AG04449 (cell line): ENCODE measurements at regions of chr10 and their contacts with region 1.

Region 1: GRCh38 chr10:116787893-116788665 is 45.7 kb upstream of the HSPA12A start:
- DNase-seq: no peak
- H3K4me3 ChIP-seq: peak overlapping the region; percentile 49
- CTCF ChIP-seq: peak; percentile 95

Region 2: GRCh38 chr10:115539142-115539762 is 1248.8 kb before region 1 on chr10:
- CTCF ChIA-PET with region 1: no interaction called
- POLR2A ChIA-PET with region 1: no interaction called
- DNase-seq: no peak
- H3K4me3 ChIP-seq: no peak overlapping the region
- CTCF ChIP-seq: no peak

Region 3: DNA sequence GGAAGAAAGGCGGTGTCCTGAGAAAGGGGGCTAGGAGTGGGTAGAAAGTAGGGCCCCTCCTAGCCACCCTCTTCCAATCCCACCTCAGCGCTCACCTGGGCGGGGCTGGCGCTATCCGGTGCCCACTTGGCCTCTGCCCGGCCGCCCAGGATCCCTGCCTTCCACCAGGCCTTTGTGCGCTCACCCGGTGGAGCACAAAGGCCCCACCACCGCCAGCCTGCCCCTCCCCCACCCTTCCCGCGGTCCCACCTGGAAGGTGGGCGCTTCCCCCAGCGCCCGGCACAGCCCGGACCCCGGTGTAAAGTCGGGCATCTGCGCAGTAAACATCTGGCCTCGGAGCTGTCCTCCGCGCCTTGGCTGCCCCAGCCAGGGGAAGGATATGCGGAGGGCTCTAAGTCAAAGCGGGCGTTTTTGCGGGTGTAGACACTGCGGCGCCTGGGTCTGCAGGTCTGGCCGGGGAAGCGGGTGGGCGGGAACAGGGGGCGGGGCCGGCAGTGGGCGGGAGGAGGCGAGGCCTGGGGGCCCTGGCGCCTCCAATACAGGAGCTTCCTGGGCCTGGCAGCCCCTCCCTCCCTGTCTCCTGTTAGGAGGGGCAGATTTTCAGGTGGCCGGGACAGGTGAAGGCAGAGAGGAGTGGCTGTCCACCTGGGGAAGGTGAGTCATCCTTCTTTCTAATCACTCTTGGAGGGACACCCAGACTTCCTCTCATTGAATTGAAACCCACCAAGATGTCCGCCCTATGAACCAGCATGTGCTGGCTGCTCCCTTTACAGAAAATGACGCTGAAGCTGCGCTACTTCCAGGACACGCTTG is 118.0 kb before region 1 on chr10:
- CTCF ChIA-PET with region 1: interaction called, 658 read pairs
- POLR2A ChIA-PET with region 1: no interaction called
- DNase-seq: no peak
- H3K4me3 ChIP-seq: no peak overlapping the region; the same call in 1 of the 2 replicates
- CTCF ChIP-seq: no peak

Region 4: DNA sequence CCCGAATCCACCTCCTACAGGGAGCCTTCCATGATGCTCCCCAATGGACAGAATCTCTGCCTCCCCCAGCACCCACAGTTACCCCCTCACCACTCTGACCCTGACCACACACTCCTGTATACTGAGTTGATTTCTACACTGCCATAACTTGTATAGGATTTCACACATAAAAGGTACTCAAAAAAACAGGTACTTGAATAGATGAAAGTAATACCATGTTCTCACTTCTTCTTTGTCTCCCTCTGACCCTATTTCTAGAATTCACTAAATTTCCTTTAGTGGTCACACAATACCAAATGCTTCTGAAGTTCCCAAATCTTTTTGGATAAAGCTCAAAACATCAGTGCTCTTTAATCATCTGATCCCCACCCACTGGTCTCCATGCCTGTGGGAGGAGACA is 91.2 kb before region 1 on chr10:
- CTCF ChIA-PET with region 1: interaction called, 658 read pairs
- POLR2A ChIA-PET with region 1: no interaction called
- DNase-seq: no peak
- H3K4me3 ChIP-seq: no peak overlapping the region
- CTCF ChIP-seq: no peak

Region 5: GRCh38 chr10:116748041-116748440 is 40.0 kb before region 1 on chr10:
- CTCF ChIA-PET with region 1: interaction called, 21 read pairs
- POLR2A ChIA-PET with region 1: no interaction called
- DNase-seq: no peak
- H3K4me3 ChIP-seq: no peak overlapping the region
- CTCF ChIP-seq: no peak

Region 6: GRCh38 chr10:116771101-116771958 is 16.7 kb before region 1 on chr10:
- CTCF ChIA-PET with region 1: interaction called, 72 read pairs
- POLR2A ChIA-PET with region 1: no interaction called
- DNase-seq: peak; percentile 76
- H3K4me3 ChIP-seq: no peak overlapping the region
- CTCF ChIP-seq: no peak

Region 7: DNA sequence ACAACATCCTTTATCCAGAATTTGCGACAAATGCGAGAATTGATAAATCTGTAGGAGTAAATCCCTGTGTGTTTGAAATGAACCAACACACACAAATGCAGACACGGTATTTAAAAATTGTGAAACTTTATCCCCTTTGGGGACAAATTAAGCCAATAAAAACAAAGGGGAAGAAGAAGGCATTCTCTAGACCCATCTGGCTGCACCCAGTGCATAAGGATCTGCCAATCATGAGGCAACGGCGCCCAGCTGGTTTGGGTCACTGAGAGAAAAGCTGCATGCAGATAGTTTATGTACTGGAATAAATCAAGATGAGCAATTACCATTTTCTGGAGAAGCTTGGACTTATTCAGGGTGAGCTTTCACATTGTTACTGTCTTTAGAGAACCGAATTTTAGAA is 304.3 kb after region 1 on chr10:
- CTCF ChIA-PET with region 1: no interaction called
- POLR2A ChIA-PET with region 1: no interaction called
- DNase-seq: no peak
- H3K4me3 ChIP-seq: no peak overlapping the region
- CTCF ChIP-seq: no peak